ENCODE measurements at regions of chr2 and their contacts with region 1.

Region 1: DNA sequence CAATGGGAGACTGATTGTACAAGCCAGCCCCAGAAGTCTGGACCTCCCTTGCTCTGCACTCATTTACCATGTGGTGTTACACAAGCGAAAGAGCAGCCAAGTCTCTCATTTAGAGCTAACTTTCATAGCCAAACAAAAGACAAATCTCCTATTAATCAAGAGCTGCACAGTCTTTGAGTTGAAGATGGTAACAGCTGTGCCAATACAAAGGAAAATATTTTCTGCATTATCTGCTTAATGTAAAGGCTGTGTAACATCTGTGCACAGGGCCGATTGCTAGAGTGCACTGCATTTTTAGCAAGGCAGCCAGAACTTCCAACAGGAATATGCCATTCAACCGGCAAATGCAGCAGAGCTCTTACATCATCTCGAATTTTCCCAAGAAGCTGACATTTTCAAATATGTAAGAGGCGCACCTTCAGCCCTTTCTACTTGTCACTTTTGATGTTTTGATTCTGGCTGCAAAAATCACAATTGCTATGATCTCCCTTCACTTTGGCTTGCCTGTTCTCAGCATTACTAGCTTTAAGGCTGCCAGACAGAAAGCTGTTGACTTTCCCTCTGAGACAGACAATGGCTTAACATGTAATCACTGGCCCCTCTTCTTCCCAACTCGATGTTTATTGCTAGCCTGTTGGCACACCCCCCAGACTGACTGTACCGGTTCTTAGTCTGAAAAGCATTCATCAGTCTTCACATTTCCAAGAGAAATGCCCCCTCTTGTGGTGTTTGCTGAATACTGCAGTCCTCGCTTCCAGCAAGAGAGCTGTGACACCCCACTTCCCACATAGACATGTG is 96.9 kb upstream of the TANK start:
- DNase-seq: peak; percentile 40
- H3K4me3 ChIP-seq: peak overlapping the region; percentile 23; the same call in 1 of the 2 replicates
- CTCF ChIP-seq: peak; percentile 75

Region 2: GRCh38 chr2:160324161-160324800 is 739.1 kb before region 1 on chr2:
- CTCF ChIA-PET with region 1: interaction called, 15 read pairs
- POLR2A ChIA-PET with region 1: no interaction called
- DNase-seq: no peak
- H3K4me3 ChIP-seq: no peak overlapping the region
- CTCF ChIP-seq: peak; percentile 62

Region 3: GRCh38 chr2:160994141-160995002 is 69.0 kb before region 1 on chr2:
- CTCF ChIA-PET with region 1: interaction called, 47 read pairs
- POLR2A ChIA-PET with region 1: no interaction called
- DNase-seq: no peak
- H3K4me3 ChIP-seq: no peak overlapping the region
- CTCF ChIP-seq: peak; percentile 58

Region 4: DNA sequence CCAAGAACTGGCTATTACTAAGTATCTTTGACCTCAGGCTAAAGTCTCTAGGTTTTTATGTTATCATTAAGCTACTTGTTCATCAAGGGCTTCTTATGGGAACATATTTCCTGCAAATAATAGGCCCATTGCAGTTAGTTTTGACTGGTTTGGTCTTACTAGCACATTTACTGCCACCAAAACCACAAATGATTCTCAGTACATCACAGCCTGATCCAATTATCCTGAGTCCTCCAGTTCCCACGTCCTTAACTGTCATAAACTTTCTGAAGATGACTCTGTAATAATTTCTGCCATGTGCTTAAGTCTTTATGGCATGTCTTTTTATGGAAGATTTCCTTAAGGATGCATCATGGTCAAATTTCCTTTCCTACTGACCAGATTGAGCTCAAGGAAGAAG is 26.4 kb before region 1 on chr2:
- CTCF ChIA-PET with region 1: interaction called, 14 read pairs
- POLR2A ChIA-PET with region 1: no interaction called
- DNase-seq: no peak
- H3K4me3 ChIP-seq: no peak overlapping the region
- CTCF ChIP-seq: no peak

Region 5: DNA sequence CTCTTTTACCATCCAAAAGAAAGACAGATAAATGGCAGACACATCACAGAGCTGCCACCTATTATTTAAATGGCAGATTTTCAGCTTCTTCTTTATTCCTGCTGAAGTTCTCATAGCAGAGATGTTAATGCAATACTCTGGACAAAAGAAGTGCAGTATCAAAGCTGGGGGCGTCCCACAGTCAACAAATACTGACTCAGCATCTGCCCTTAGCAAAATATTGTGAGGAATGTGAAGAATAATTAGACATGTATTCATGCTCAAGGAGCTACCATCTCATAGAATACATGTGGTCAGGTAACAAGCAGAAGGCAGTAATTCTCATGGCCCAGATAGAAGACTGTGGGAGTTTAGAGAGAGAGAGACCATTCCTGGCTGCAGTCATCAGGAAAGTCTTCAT is 11.1 kb before region 1 on chr2:
- CTCF ChIA-PET with region 1: interaction called, 72 read pairs
- POLR2A ChIA-PET with region 1: no interaction called
- DNase-seq: no peak
- H3K4me3 ChIP-seq: no peak overlapping the region
- CTCF ChIP-seq: no peak

Region 6: DNA sequence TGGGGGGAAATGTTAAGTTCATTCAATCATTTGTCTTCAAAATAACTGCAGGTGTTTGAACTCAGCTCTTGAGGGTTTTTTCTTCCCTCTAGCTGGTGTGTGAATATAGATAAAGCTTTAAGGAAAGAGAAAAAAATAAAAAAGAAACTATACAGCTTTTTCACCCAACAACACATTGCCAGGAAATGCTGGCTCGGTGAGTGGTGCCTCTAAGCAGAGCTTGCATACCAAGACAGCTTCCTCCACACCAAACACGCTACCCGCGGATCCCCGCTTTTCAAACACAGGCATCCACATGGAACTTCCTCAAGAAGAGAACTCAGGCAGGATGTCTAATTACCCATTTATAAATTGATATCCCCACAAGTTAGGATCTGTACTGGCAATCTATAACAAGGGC is 27.1 kb after region 1 on chr2:
- CTCF ChIA-PET with region 1: interaction called, 31 read pairs
- POLR2A ChIA-PET with region 1: no interaction called
- DNase-seq: no peak
- H3K4me3 ChIP-seq: no peak overlapping the region
- CTCF ChIP-seq: no peak

Region 7: GRCh38 chr2:161217597-161218185 is 154.3 kb after region 1 on chr2:
- CTCF ChIA-PET with region 1: no interaction called
- POLR2A ChIA-PET with region 1: no interaction called
- DNase-seq: no peak
- H3K4me3 ChIP-seq: no peak overlapping the region
- CTCF ChIP-seq: no peak

Region 8: DNA sequence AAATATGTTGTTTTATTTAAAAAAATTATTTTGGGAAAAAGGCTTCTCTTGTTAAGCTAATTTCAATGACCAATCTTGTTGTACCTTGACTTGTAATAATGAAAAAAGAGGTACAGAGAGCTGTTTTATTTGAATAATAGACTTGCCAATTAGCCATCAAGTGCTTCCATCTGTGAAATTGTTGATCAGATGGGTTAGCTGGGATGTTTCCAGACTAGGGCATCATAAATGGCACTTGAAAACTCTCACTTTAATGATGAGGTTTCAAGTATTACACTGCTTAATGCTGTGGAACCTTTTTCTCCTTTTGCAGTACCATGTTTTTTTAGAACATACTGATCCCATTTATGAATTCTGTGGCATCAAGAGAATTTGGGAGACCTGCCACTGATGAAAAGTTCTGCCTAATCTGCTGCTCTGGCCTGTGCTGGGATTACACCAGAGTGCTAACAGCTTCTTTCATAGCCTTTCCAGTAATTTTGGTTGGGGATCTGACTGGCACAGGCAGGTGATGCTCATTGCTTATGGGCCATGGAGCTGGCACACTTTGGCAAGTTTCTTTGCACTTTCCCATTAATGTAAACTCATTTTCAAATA is 269.1 kb after region 1 on chr2:
- CTCF ChIA-PET with region 1: no interaction called
- POLR2A ChIA-PET with region 1: no interaction called
- DNase-seq: no peak
- H3K4me3 ChIP-seq: no peak overlapping the region
- CTCF ChIP-seq: no peak